Ovary (tissue), 10 donors: ENCODE measurements at regions of chr3 and their contacts with region 1.

Region 1: DNA sequence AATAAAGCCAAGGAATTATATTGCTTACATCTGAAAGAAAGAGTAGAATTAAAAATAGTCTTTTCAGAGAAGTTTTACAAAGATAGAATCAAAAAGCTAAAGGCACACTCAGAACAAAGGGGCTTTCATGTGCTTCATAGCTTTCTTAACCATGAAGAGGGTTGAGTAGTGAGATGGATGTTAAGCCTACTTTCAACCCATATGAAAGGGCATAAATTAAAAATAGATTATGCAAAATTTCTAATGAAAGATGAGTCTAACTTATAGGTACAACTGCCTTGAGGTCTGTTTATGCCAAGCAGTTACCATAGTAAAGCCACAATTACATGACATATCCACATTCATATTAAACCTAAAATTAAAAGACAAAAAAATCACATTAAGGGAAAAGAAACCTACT is 223.3 kb upstream of the ARHGEF26 start:
- DNase-seq: no peak
- H3K4me3 ChIP-seq: no peak overlapping the region
- H3K27ac ChIP-seq: no peak overlapping the region
- H3K4me1 ChIP-seq: no peaks in the 10 kb centered on the region
- H3K27me3 ChIP-seq: no peaks in the 10 kb centered on the region
- CTCF ChIP-seq: no peak
- EP300 ChIP-seq: no peak
- POLR2A ChIP-seq: no peak

Region 2: DNA sequence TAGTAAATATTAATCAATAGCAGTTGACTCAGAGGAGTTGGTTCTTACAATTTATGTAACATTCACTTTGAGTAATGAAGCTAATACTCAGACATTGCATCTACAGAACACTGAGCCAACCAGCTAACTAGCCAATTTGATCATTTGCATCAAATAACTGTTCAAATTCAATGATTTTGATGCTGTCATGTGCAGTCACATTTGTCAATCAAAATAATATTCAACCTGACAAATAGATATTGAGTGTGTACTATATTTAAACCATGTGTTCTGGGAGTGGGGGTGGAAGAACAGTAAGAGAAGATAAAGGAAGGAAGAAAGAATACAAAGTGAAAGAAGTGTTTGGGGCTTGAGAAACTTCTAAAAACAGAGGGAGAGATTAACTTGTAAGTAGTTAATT is 53.8 kb before region 1 on chr3:
- intact Hi-C with region 1: loop called in 1 of 4 experiments (anchors 2 kb)
- DNase-seq: no peak
- H3K4me3 ChIP-seq: no peak overlapping the region
- H3K27ac ChIP-seq: no peak overlapping the region
- H3K4me1 ChIP-seq: no peaks in the 10 kb centered on the region
- H3K27me3 ChIP-seq: no peaks in the 10 kb centered on the region
- CTCF ChIP-seq: no peak
- EP300 ChIP-seq: no peak
- POLR2A ChIP-seq: no peak